A673 (cell line): ENCODE measurements at regions of chr7 and their contacts with region 1.

Region 1: DNA sequence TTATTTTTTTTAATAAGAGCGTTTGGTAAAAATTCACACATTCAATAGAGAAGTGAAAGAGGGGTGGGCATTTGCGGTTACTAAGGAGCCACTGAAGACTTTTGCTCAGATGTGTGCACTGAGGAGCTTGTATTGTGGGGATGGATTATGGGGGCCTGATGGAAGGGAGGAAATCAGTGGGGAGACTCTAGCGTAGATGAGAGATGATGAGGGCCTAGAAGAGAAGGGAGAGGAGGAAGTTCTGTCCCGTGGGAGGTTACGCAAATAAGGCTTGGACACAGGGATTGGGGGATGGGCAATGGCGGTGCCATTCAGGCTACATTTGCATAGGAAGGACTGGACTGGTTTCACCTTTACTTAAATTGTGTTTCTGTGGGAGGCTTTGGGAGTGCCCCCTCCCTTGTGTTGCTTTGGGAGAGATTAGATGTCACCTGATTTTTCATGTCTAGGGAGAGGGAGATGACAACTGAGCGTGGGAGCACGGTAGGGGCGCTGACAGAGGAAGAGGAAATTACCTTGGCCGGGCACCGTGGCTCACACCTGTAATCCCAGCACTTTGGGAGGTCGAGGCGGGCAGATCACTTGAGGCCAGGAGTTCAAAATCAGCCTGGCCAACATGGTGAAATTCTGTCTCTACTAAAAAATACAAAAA is 2.2 kb upstream of the HIP1 start:
- DNase-seq: peak; percentile 34
- H3K4me3 ChIP-seq: no peak overlapping the region
- H3K27ac ChIP-seq: no peak overlapping the region
- H3K4me1 ChIP-seq: peaks cover 19% of the 10 kb centered on the region
- H3K27me3 ChIP-seq: no peaks in the 10 kb centered on the region
- CTCF ChIP-seq: no peak

Region 2: GRCh38 chr7:75727881-75728592 is 12.9 kb before region 1 on chr7:
- CTCF ChIA-PET with region 1: no interaction called
- POLR2A ChIA-PET with region 1: no interaction called
- intact Hi-C with region 1: loop called (anchors 1 kb)
- DNase-seq: no peak
- H3K4me3 ChIP-seq: no peak overlapping the region
- H3K27ac ChIP-seq: no peak overlapping the region
- H3K4me1 ChIP-seq: no peaks in the 10 kb centered on the region
- H3K27me3 ChIP-seq: no peaks in the 10 kb centered on the region
- CTCF ChIP-seq: no peak

Region 3: GRCh38 chr7:75762314-75762917 is 21.4 kb after region 1 on chr7:
- CTCF ChIA-PET with region 1: no interaction called
- POLR2A ChIA-PET with region 1: no interaction called
- intact Hi-C with region 1: no loop called
- DNase-seq: peak; percentile 60
- H3K4me3 ChIP-seq: no peak overlapping the region
- H3K27ac ChIP-seq: no peak overlapping the region
- H3K4me1 ChIP-seq: no peaks in the 10 kb centered on the region
- H3K27me3 ChIP-seq: no peaks in the 10 kb centered on the region
- CTCF ChIP-seq: peak; percentile 66

Region 4: GRCh38 chr7:76340617-76341131 is 599.7 kb after region 1 on chr7:
- CTCF ChIA-PET with region 1: no interaction called
- POLR2A ChIA-PET with region 1: no interaction called
- intact Hi-C with region 1: no loop called
- DNase-seq: no peak
- H3K4me3 ChIP-seq: no peak overlapping the region
- H3K27ac ChIP-seq: peak overlapping the region; percentile 59
- H3K4me1 ChIP-seq: peaks cover 24% of the 10 kb centered on the region
- H3K27me3 ChIP-seq: no peaks in the 10 kb centered on the region
- CTCF ChIP-seq: no peak